Activated naive CD4-positive, alpha-beta T cell treated with anti-CD3 and anti-CD28 coated beads for 36 hours (primary cell): ENCODE measurements at regions of chr3 and their contacts with region 1.

Region 1: GRCh38 chr3:98602078-98602678 is 8.8 kb upstream of the CPOX start:
- DNase-seq: peak; percentile 50
- H3K4me3 Mint-ChIP-seq: no peak overlapping the region
- H3K27ac Mint-ChIP-seq: no peak overlapping the region
- H3K4me1 Mint-ChIP-seq: no peaks in the 10 kb centered on the region
- H3K27me3 Mint-ChIP-seq: peaks cover 8% of the 10 kb centered on the region

Region 2: GRCh38 chr3:98657457-98657856 is 55.3 kb after region 1 on chr3:
- CTCF ChIA-PET with region 1: interaction called, 17 read pairs
- intact Hi-C with region 1: loop called (anchors 1 kb)
- DNase-seq: peak; percentile 58
- H3K4me3 Mint-ChIP-seq: no peak overlapping the region
- H3K27ac Mint-ChIP-seq: no peak overlapping the region
- H3K4me1 Mint-ChIP-seq: peaks cover 3% of the 10 kb centered on the region
- H3K27me3 Mint-ChIP-seq: peaks cover 19% of the 10 kb centered on the region

Region 3: DNA sequence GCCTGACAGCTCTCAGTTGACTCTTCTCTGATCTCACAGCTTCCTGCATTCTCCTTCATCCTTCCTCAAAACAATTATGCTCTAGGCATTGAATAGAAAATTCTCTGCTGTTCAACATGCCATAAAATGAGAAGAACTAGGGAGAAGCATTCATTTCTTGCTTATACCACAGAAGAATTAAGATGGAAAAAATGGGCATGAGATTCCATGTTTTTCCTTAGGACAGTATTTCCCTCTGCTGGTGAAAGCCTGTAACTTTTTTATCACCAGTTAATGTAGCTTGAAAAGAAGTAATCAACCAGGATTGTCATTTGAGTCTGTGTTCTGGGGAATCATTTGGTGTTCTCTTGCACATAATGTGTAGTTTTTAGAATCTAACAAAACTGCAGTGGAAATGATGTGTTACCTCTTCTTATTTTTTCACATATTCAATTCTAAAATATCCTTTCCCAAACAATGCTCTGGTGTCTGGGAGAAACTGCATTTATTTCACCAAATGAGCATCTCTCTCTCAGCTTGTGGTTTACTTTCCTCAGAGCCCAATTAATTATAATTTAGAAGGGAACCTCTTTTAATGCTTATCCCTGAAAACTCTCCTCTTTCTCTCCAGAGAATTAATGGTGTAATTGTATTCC is 392.1 kb after region 1 on chr3:
- CTCF ChIA-PET with region 1: no interaction called
- intact Hi-C with region 1: loop called (anchors 5 kb)
- DNase-seq: no peak
- H3K4me3 Mint-ChIP-seq: no peak overlapping the region
- H3K27ac Mint-ChIP-seq: no peak overlapping the region
- H3K4me1 Mint-ChIP-seq: no peaks in the 10 kb centered on the region
- H3K27me3 Mint-ChIP-seq: peaks cover 3% of the 10 kb centered on the region

Region 4: GRCh38 chr3:99012051-99012450 is 409.9 kb after region 1 on chr3:
- CTCF ChIA-PET with region 1: no interaction called
- intact Hi-C with region 1: no loop called
- DNase-seq: no peak
- H3K4me3 Mint-ChIP-seq: no peak overlapping the region
- H3K27ac Mint-ChIP-seq: no peak overlapping the region
- H3K4me1 Mint-ChIP-seq: no peaks in the 10 kb centered on the region
- H3K27me3 Mint-ChIP-seq: peaks cover 5% of the 10 kb centered on the region

Region 5: DNA sequence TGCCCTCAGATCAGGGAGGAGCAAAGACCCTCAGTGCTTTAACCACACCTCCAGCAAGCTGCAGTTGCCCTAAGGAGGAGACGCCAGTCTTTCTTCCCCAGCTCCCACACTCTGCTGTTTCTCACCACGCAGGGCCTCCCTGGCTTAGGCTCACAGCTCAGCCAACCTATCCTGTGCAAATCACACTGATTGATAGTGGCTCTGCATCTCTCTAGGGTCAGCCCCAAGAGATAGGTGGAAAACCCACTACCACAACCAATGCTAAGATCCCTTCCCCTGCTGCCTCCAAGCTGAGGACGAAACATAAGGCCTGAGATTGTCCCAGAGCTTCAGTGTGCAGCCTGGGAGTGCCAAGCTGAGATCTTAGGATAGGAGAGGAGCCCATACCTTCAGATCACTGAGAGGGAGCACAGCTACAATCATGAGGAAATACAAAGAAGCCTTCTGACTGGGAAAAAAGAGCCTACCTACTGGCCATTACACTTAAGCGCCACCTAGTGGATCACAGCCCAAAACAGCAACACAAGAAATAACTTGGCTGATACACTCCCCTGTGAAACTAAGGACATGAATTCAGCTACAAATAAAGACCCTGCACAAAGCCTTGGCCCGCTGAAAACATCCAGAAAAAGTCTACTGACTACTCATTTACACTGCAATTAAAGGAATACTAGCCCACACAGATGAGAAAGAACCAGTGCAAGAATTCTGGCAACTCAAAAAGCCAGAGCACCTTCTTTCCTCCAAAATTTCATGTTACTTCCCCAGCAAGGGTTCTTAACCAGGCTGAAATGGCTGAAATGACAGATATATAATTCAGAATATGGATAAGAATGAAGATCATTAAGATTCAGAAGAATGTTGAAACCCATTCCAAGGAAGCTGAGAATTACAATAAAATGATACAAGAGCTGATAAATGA is 570.8 kb after region 1 on chr3:
- CTCF ChIA-PET with region 1: no interaction called
- intact Hi-C with region 1: loop called (anchors 5 kb)
- DNase-seq: peak; percentile 59
- H3K4me3 Mint-ChIP-seq: no peak overlapping the region
- H3K27ac Mint-ChIP-seq: no peak overlapping the region
- H3K4me1 Mint-ChIP-seq: no peaks in the 10 kb centered on the region
- H3K27me3 Mint-ChIP-seq: peaks cover 2% of the 10 kb centered on the region